Activated T-helper 2 cell treated with anti-CD3 and anti-CD28 coated beads, Interferon-gamma antibody, Interleukin-2, Interleukin-4, amounts not matched to agents 10 μg/mL and 5 μg/mL and 100 μg/mL, durations not matched to agents 14 hours and 24 hours and 36 hours (primary cell): ENCODE measurements at regions of chr12 and their contacts with region 1.

Region 1: GRCh38 chr12:50400598-50401364 is at the start of gene LARP4:
- DNase-seq: peak; percentile 90
- H3K4me3 Mint-ChIP-seq: peak within 1 kb of the TSS; percentile 95
- H3K27ac Mint-ChIP-seq: peak within 1 kb of the TSS; percentile 92
- H3K4me1 Mint-ChIP-seq: peaks cover 24% of the 10 kb centered on the region
- H3K27me3 Mint-ChIP-seq: peaks cover 7% of the 10 kb centered on the region
- total RNA-seq, gene LARP4: 99.4 and 102 TPM in 2 replicates

Region 2: GRCh38 chr12:50084775-50085614 is 315.8 kb before region 1 on chr12 and contains the start of gene SMARCD1:
- intact Hi-C with region 1: loop called (anchors 5 kb)
- DNase-seq: peak; percentile 77
- H3K4me3 Mint-ChIP-seq: peak within 1 kb of the TSS; percentile 88
- H3K27ac Mint-ChIP-seq: peak within 1 kb of the TSS; percentile 93
- H3K4me1 Mint-ChIP-seq: peaks cover 29% of the 10 kb centered on the region
- H3K27me3 Mint-ChIP-seq: no peaks in the 10 kb centered on the region
- total RNA-seq, gene SMARCD1: 71.5 and 76.8 TPM in 2 replicates

Region 3: DNA sequence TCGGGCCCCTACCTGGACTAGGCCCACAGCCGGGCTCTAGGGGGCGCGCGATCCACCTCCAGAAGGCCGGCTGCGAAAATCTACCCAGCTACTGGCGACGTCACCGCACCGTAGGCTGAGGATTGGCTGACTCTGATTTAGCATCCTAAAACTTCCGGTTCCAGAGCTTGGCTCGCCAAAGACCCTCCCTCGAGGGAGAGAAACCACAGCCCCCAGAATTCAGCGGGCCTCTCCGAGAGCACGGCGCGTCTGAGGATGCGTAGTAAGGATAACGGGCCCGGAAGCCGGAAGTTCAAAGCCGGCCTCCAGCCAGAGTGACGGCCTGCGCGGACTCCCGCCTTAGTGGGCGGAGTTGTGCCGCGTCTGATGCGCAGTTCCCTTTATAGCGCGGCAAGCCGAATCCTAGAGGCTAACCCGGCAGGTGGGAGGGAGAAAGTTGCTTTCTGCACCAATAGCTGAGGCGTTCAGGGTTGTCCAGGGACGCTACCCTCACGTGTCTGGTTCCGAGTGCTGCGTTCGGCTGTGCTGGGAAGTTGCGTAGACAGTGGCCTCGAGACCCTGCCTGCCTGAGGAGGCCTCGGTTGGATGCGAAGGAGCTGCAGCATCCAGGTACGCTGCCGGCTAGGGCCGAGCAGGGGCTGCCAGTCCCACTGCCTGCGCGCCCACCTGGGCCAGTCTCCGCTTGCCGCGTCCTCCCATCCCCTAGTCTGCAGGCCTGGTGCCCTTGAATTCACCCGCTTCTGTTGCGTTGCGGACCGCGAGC is 288.9 kb before region 1 on chr12 and contains the start of gene COX14:
- intact Hi-C with region 1: loop called (anchors 2 kb)
- DNase-seq: peak; percentile 99
- H3K4me3 Mint-ChIP-seq: peak within 1 kb of the TSS; percentile 99
- H3K27ac Mint-ChIP-seq: peak within 1 kb of the TSS; percentile 98
- H3K4me1 Mint-ChIP-seq: peaks cover 24% of the 10 kb centered on the region
- H3K27me3 Mint-ChIP-seq: no peaks in the 10 kb centered on the region
- total RNA-seq, gene COX14: 38.1 and 43.5 TPM in 2 replicates

Region 4: DNA sequence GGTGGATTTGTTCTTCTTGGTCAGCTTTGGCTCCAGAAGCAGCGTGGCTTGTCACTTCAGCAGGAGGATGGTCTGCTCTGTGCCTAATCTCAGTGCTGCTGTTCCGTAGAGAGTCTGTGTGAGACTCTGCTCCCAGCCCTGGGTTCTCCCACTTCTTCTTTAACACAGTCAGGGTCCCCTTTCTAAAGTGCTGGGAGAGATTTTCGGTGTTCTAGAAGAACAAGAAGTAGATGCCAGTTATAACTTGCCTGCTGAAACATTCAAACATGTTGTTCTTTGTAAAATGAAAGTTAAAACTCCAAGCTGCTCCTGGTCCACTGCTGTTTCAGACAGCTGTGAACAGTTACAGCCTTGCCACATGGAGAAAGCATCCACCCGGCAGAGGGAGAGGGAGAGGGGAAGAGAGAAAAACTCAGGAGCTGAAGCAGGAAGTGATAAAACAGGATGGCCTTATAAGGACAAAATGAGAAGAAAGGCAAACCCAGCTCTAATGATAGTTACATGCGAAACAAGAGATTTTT is 178.4 kb before region 1 on chr12:
- intact Hi-C with region 1: loop called (anchors 5 kb)
- DNase-seq: no peak
- H3K4me3 Mint-ChIP-seq: no peak overlapping the region
- H3K27ac Mint-ChIP-seq: no peak overlapping the region
- H3K4me1 Mint-ChIP-seq: peaks cover 28% of the 10 kb centered on the region
- H3K27me3 Mint-ChIP-seq: no peaks in the 10 kb centered on the region

Region 5: DNA sequence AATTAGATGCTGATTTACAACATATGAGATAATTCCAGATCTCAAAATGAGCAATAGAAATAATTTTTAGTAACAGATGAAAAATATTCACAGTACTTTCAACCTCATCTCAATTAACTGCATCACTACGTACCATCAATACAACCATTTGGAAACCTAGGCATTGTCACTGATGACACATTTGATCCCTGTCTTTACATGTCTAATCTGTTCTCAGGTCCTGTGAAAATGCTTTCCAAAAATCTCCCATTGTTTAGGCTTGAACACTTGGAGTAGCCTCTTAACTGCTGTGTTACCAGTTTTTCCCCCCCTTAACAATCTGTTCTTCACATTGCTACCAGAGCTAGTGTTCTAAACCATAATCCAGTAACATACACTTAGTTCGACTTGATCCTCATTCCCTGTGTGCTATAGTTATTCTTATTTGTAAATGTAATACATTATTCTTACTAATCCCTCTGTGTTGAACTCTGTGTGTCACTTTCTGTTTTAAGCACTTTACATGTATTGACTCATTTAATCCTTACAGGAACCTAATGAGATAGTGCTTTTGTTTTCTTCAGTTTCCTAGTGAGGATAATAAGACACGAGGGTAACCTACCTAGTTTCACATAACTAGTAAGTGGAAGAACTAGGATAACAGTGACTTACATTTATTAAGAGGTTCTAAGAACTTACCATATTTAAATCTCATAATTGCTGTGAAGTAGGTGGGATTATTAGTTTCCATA is 41.6 kb after region 1 on chr12:
- intact Hi-C with region 1: loop called (anchors 1 kb)
- DNase-seq: no peak
- H3K4me3 Mint-ChIP-seq: no peak overlapping the region
- H3K27ac Mint-ChIP-seq: peak overlapping the region; percentile 58
- H3K4me1 Mint-ChIP-seq: peaks cover 17% of the 10 kb centered on the region
- H3K27me3 Mint-ChIP-seq: no peaks in the 10 kb centered on the region